Motor neuron (in vitro differentiated cells): ENCODE measurements at regions of chr2 and their contacts with region 1.

Region 1: GRCh38 chr2:10135296-10136089 is 13.0 kb downstream of the RRM2 start:
- ATAC-seq: peak; percentile 5 to 70 (median 43)
- H3K4me3 ChIP-seq: no peak overlapping the region
- H3K27ac ChIP-seq: no peak overlapping the region
- H3K4me1 ChIP-seq: peaks cover 0 to 6% of the 10 kb centered on the region in 2 donors

Region 2: DNA sequence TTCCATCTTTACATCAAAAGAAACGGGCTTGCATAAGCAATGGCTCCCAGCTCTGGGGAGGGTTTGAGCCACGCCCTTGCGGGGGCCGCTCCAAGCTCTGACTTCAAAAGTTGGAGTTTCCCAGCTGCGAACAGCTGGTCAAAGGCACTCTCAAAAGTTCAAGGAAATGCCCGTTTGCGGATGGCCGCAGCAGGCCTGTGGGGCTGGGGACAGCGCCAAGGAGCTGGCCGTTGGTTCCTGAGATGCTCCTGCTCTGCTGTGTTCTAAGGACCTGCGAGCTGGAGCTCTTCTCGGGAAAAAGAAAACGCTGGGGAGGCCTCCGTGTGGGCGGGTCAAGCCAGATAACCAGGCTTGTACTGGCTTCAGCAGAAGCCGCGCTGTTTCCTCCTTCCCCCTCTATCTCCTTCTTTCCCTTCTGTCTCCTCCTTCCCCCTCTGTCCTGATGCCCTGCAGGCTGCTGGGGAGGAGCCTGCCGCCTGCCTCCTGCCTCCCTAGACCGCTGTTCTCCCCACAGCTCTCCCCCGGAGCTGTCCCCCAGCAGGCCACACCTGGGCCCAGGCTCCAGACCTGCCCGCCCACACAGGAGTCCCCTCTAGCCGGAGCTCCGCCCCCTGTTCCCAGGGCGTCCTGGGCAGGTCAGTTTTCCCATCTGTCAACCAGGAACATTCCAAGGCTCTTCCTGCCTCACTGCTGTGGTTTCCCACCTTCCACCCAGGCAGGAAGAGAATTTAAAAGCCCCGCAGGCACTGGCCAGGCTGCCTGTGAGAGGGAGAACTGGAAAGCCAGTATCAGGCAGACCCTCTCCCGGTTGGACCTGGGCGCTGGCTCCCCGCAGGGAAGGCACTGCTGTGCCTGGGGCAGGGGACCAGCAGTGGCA is 78.0 kb before region 1 on chr2:
- in situ Hi-C with region 1: no loop called
- ATAC-seq: peak; percentile 59 to 82 (median 76)
- H3K4me3 ChIP-seq: peak overlapping the region in 2 of 5 donors; percentile 11 to 16
- H3K27ac ChIP-seq: peak overlapping the region in 1 of 2 donors; percentile 0
- H3K4me1 ChIP-seq: peaks cover 4 to 16% of the 10 kb centered on the region in 2 donors

Region 3: DNA sequence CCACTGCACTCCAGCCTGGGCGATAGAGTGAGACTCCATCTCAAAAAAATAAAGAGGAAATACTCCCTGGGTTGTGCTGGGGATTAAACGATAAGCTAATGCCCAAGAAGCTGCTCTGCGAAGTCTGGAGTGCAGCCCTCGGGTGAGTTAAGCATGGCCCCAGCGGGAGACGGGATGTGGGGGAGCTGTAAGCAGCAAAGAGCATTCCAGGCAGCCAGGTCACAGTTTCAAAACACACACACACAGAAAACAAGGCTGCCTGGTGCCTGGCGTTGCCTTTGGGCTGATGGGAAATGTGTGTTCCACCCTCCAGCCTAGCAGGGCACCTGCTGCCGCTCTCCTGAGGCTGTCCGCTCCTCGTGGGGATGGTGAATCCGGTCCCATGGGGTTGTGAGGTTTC is 288.6 kb after region 1 on chr2:
- in situ Hi-C with region 1: loop called in 6 of 9 experiments (anchors 10 to 25 kb)
- ATAC-seq: no peak
- H3K4me3 ChIP-seq: no peak overlapping the region
- H3K27ac ChIP-seq: no peak overlapping the region
- H3K4me1 ChIP-seq: peaks cover 20 to 30% of the 10 kb centered on the region in 2 donors